T-cell (primary cell): ENCODE measurements at regions of chr12 and their contacts with region 1.

Region 1: DNA sequence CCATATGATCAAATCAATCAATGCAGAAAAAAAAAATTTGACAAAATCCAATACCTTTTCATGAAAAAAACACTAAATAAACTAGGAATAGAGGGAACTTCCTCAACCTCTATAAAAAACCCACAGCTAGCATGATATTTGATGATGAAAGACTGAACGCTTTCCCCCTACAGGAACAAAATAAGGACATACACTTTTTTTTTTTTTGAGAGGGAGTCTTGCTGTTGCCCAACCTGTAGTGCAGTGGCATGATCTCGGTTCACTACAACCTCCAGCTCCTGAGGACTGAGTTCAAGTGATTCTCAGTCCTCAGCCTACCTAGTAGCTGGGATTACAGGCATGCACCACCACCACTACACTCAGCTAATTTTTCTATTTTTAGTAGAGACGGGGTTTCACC is 17.9 kb upstream of the CAMKK2 start:
- DNase-seq: no peak
- ATAC-seq: no peak
- H3K4me3 ChIP-seq: no peak overlapping the region
- H3K4me3 Mint-ChIP-seq: no peak overlapping the region
- H3K27ac ChIP-seq: no peak overlapping the region
- H3K27ac Mint-ChIP-seq: peak overlapping the region; percentile 45 to 50
- H3K4me1 ChIP-seq: peaks cover 0 to 4% of the 10 kb centered on the region in 2 experiments
- H3K4me1 Mint-ChIP-seq: peaks cover 19 to 31% (median 29%) of the 10 kb centered on the region in 3 donors
- H3K27me3 ChIP-seq: no peaks in the 10 kb centered on the region
- H3K27me3 Mint-ChIP-seq: no peaks in the 10 kb centered on the region

Region 2: GRCh38 chr12:121334513-121335343 is 20.3 kb after region 1 on chr12:
- CTCF ChIA-PET with region 1: interaction called in 1 of 2 experiments, 5 read pairs
- POLR2A ChIA-PET with region 1: interaction called in 1 of 2 experiments, 11 read pairs
- DNase-seq: peak in 9 of 35 experiments; percentile 5 to 71 (median 20)
- ATAC-seq: peak; percentile 54 to 79 (median 75)
- H3K4me3 ChIP-seq: no peak overlapping the region
- H3K4me3 Mint-ChIP-seq: no peak overlapping the region
- H3K27ac ChIP-seq: no peak overlapping the region
- H3K27ac Mint-ChIP-seq: no peak overlapping the region
- H3K4me1 ChIP-seq: peaks cover 0 to 2% of the 10 kb centered on the region in 2 experiments
- H3K4me1 Mint-ChIP-seq: peaks cover 3 to 4% (median 4%) of the 10 kb centered on the region in 3 donors
- H3K27me3 ChIP-seq: no peaks in the 10 kb centered on the region
- H3K27me3 Mint-ChIP-seq: no peaks in the 10 kb centered on the region

Region 3: GRCh38 chr12:121364683-121365121 is 50.3 kb after region 1 on chr12:
- CTCF ChIA-PET with region 1: no interaction called
- POLR2A ChIA-PET with region 1: no interaction called
- DNase-seq: no peak
- ATAC-seq: no peak
- H3K4me3 ChIP-seq: no peak overlapping the region
- H3K4me3 Mint-ChIP-seq: no peak overlapping the region
- H3K27ac ChIP-seq: no peak overlapping the region
- H3K27ac Mint-ChIP-seq: no peak overlapping the region
- H3K4me1 ChIP-seq: no peaks in the 10 kb centered on the region
- H3K4me1 Mint-ChIP-seq: no peaks in the 10 kb centered on the region
- H3K27me3 ChIP-seq: peaks cover 0 to 19% of the 10 kb centered on the region in 2 experiments
- H3K27me3 Mint-ChIP-seq: peaks cover 13 to 14% of the 10 kb centered on the region in 2 donors

Region 4: GRCh38 chr12:121610239-121611149 is 296.1 kb after region 1 on chr12:
- CTCF ChIA-PET with region 1: no interaction called
- POLR2A ChIA-PET with region 1: no interaction called
- DNase-seq: no peak
- ATAC-seq: no peak
- H3K4me3 ChIP-seq: no peak overlapping the region
- H3K4me3 Mint-ChIP-seq: no peak overlapping the region
- H3K27ac ChIP-seq: no peak overlapping the region
- H3K27ac Mint-ChIP-seq: peak overlapping the region; percentile 31 to 48
- H3K4me1 ChIP-seq: peaks cover 0 to 13% of the 10 kb centered on the region in 2 experiments
- H3K4me1 Mint-ChIP-seq: peaks cover 6 to 7% (median 7%) of the 10 kb centered on the region in 3 donors
- H3K27me3 ChIP-seq: no peaks in the 10 kb centered on the region
- H3K27me3 Mint-ChIP-seq: no peaks in the 10 kb centered on the region